ENCODE measurements at regions of chr22 and their contacts with region 1.

Region 1: GRCh38 chr22:38733329-38733723 is 22.5 kb downstream of the SUN2 start:
- DNase-seq: peak in 2 of 3 donors; percentile 43 to 54
- H3K4me3 ChIP-seq: no peak overlapping the region
- H3K27ac ChIP-seq: no peak overlapping the region
- H3K4me1 ChIP-seq: peaks cover 0 to 21% (median 3%) of the 10 kb centered on the region in 4 experiments
- H3K27me3 ChIP-seq: no peaks in the 10 kb centered on the region

Region 2: GRCh38 chr22:38715176-38715764 is 18.1 kb before region 1 on chr22:
- CTCF ChIA-PET with region 1: interaction called, 13 read pairs
- POLR2A ChIA-PET with region 1: interaction called, 3 read pairs
- DNase-seq: no peak
- H3K4me3 ChIP-seq: no peak overlapping the region
- H3K27ac ChIP-seq: no peak overlapping the region
- H3K4me1 ChIP-seq: peaks cover 2 to 28% (median 14%) of the 10 kb centered on the region in 4 experiments
- H3K27me3 ChIP-seq: no peaks in the 10 kb centered on the region

Region 3: DNA sequence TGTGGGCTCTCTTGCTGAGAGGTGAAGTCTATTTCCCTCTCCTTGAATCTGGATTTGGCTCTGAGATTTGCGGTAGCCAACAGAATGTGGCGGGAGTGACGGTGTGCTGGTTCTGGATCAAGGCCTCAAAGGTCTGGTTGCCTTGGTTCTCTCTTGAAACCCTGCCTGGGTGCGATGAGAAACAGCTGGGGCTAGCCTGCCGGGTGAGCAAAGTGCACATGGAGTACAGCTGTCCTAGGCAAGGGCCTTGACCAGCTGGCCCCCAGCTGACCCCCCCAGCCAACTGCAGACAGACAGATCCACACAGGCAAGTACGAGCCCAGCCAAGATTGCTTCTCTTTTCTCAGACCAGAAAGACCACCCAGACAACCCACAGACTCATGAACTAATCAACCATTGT is 11.7 kb after region 1 on chr22:
- CTCF ChIA-PET with region 1: interaction called, 42 read pairs
- POLR2A ChIA-PET with region 1: no interaction called
- DNase-seq: no peak
- H3K4me3 ChIP-seq: no peak overlapping the region
- H3K27ac ChIP-seq: no peak overlapping the region
- H3K4me1 ChIP-seq: peaks cover 0 to 3% (median under 1%) of the 10 kb centered on the region in 4 experiments
- H3K27me3 ChIP-seq: no peaks in the 10 kb centered on the region

Region 4: GRCh38 chr22:38802671-38803121 is 69.4 kb after region 1 on chr22:
- CTCF ChIA-PET with region 1: no interaction called
- POLR2A ChIA-PET with region 1: no interaction called
- DNase-seq: peak in 2 of 3 donors; percentile 4 to 11
- H3K4me3 ChIP-seq: no peak overlapping the region
- H3K27ac ChIP-seq: no peak overlapping the region
- H3K4me1 ChIP-seq: no peaks in the 10 kb centered on the region
- H3K27me3 ChIP-seq: peaks cover 0 to 38% (median 9%) of the 10 kb centered on the region in 5 experiments

Measured in common myeloid progenitor, CD34-positive (primary cell).